ENCODE measurements at regions of chr7 and their contacts with region 1.

Region 1: GRCh38 chr7:16098585-16099179 is 322.7 kb downstream of the CRPPA start:
- DNase-seq: no peak
- ATAC-seq: no peak
- H3K4me3 ChIP-seq: no peak overlapping the region
- H3K27ac ChIP-seq: no peak overlapping the region
- H3K4me1 ChIP-seq: no peaks in the 10 kb centered on the region
- H3K27me3 ChIP-seq: no peaks in the 10 kb centered on the region
- CTCF ChIP-seq: peak; percentile 29 to 50 (median 47); a peak in 5 of 6 replicates
- EP300 ChIP-seq: no peak
- POLR2A ChIP-seq: no peak
- RAD21 ChIP-seq: peak; percentile 34

Region 2: DNA sequence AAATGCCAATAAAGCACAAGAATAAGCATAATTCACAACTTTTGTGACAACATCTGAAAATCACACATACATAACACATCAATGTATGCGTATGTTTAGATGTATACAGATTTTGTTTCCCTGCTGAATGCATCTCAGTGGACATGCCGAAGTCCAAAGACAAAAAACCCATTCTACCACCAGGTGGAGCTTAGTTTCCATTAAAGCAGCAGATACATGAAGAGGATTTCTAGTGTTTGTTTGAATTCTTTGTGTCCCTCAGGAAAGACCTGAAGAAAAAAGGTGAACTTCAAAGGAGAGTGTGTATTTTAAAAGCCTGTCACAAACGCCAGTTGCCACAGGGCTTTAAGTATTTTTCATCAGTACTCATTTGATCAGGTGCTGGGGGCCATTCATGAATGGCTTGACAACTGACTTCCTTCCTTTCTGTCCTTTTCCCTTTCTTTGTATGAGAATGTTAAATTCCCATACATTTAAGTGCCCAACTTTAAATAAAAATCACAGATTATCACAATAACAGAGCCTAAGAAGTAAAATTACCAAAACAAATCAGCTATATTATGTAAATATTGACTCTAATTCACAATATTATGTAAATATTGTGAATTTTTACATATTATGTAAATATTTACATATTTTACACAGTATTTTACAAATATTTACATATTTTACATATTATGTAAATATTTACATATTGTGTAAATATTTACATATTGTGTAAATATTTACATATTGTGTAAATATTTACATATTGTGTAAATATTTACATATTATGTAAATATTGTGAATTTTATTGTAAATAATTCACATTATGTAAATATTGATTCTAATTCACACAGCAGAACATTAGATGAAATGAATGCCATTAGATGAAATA is 20.4 kb before region 1 on chr7:
- CTCF ChIA-PET with region 1: interaction called, 15 read pairs
- POLR2A ChIA-PET with region 1: no interaction called
- RAD21 ChIA-PET with region 1: no interaction called
- SMC1A ChIA-PET with region 1: interaction called, 4 read pairs
- in situ Hi-C with region 1: no loop called
- intact Hi-C with region 1: no loop called
- DNase-seq: no peak
- ATAC-seq: peak; percentile 75
- H3K4me3 ChIP-seq: no peak overlapping the region
- H3K27ac ChIP-seq: no peak overlapping the region
- H3K4me1 ChIP-seq: no peaks in the 10 kb centered on the region
- H3K27me3 ChIP-seq: no peaks in the 10 kb centered on the region
- CTCF ChIP-seq: peak; percentile 55 to 60 (median 57)
- EP300 ChIP-seq: no peak
- POLR2A ChIP-seq: no peak
- RAD21 ChIP-seq: peak; percentile 65